Activated CD4-positive, alpha-beta T cell treated with anti-CD3 and anti-CD28 coated beads for 36 hours (primary cell): ENCODE measurements at regions of chr3 and their contacts with region 1.

Region 1: DNA sequence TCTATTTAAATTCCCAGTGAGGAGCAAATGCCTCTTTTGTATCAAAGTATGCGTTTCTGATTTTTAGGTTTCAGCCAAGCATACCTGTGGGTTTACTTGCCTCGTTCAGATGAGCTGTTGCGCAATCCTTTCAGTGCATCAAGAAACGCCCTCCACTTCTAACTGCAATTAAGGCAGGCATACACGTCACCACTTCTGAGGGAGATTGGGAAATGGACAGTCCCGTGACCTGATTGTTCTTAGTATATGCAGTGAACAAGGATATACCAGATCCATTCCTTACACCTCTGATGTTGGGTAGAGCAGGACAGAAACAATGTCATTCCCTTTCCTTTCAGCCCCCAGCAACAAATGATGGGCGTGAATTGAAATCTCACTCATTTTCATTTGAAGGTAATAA is 219.0 kb downstream of the ITPR1 start:
- DNase-seq: no peak
- ATAC-seq: no peak
- H3K4me3 Mint-ChIP-seq: no peak overlapping the region
- H3K27ac Mint-ChIP-seq: no peak overlapping the region
- H3K4me1 Mint-ChIP-seq: no peaks in the 10 kb centered on the region
- H3K27me3 Mint-ChIP-seq: no peaks in the 10 kb centered on the region

Region 2: DNA sequence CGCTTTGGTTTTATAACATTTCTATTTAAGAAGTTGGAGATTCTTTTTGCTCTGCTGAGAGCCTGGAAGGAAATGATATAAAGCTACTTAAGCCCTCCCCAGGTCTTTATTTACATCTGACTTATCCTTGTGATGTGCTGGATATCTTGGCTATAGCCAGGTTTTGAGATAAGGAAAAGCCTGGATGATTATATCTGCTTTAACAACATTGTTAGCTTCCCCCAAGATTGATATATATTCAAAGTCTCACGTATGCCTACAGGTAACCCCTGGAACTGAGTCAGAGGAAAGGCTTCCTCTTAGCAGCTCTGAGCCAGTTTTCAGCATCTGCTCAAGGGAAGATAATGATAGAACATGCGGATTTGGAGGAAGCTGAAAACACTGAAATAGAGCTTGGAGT is 1471.2 kb before region 1 on chr3:
- CTCF ChIA-PET with region 1: no interaction called
- POLR2A ChIA-PET with region 1: no interaction called
- intact Hi-C with region 1: no loop called
- DNase-seq: no peak
- ATAC-seq: no peak
- H3K4me3 Mint-ChIP-seq: no peak overlapping the region
- H3K27ac Mint-ChIP-seq: no peak overlapping the region
- H3K4me1 Mint-ChIP-seq: no peaks in the 10 kb centered on the region
- H3K27me3 Mint-ChIP-seq: no peaks in the 10 kb centered on the region

Region 3: GRCh38 chr3:4340411-4341335 is 371.5 kb before region 1 on chr3:
- CTCF ChIA-PET with region 1: no interaction called
- POLR2A ChIA-PET with region 1: no interaction called
- intact Hi-C with region 1: no loop called
- DNase-seq: no peak
- ATAC-seq: no peak
- H3K4me3 Mint-ChIP-seq: no peak overlapping the region
- H3K27ac Mint-ChIP-seq: peak overlapping the region; percentile 1
- H3K4me1 Mint-ChIP-seq: no peaks in the 10 kb centered on the region
- H3K27me3 Mint-ChIP-seq: no peaks in the 10 kb centered on the region

Region 4: DNA sequence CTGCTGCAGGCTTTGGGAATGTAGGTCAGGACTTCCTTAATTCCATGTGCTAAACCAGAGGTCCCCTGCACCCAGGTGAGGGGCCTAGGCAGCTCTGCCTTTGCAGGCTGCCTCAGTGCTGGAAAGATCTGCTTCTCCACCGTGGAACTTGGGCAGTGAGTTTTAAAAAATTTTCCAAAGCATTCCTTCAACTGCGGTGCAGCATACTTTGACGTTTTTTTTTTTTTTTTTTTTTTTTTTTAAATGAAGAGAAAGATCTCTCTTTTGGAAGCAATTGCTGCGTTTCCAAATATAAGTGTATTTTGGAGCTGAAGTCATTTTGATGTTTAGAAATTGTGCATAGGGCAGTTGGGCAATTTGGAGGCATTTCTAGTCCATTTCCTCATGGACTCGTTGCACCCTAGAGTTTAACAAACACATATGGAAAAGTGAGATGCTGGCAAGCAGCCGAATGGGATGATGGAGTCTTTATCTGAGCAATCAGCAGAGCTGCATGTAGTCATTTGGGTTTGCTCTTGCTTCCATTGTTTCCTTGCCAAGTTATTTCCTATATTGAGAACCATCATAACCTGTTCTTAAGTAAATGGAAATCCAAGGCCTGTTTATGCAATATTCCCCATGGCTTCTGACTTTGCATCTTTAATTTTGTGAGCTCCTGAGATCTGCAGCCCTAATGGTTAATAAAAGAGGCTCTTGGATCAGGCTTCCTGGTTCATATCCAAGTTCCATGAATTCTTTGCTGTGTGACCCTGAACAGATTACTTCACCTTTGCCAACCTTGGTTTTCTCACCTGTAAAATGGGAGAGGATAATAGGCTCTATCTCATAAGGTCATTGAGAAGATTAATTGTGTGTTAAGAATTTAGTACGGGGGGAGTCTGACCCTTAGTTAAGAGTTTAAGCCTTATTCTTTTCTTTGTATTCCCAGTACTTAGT is 187.8 kb before region 1 on chr3:
- CTCF ChIA-PET with region 1: no interaction called
- POLR2A ChIA-PET with region 1: no interaction called
- intact Hi-C with region 1: no loop called
- DNase-seq: no peak
- ATAC-seq: no peak
- H3K4me3 Mint-ChIP-seq: no peak overlapping the region
- H3K27ac Mint-ChIP-seq: no peak overlapping the region
- H3K4me1 Mint-ChIP-seq: peaks cover 19% of the 10 kb centered on the region
- H3K27me3 Mint-ChIP-seq: no peaks in the 10 kb centered on the region

Region 5: DNA sequence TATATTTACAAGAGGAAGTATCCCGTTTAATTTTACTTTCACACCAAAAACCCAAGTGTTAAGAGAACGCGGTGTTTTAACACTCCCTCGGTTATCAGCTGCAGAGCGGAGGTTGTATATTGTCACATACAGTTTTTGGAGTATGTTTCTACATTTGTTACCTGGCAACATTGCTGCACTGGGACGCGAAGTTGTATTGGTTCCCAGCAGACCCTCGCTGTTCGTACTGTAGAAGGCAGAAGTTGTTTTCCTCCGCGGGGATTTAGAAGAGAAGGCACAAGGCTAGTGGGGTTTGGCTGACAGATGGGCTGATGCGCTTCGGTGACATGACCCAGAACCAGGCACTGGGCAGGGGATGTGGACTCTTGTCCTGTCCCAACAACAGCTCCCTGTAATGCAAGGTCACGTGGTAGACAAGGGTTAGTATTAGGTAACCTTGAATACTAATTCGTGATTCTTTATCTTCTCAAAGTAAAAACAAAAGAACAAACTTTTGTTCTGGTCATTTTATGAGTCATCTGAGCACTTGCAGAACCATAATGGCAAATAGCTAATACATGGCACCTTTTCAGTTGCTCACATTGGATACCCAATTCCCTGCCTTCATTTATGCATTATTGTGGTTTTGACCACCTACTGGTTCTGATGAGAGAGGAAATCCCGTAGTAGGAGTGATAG is 36.7 kb after region 1 on chr3:
- CTCF ChIA-PET with region 1: interaction called, 13 read pairs
- POLR2A ChIA-PET with region 1: no interaction called
- intact Hi-C with region 1: no loop called
- DNase-seq: no peak
- ATAC-seq: no peak
- H3K4me3 Mint-ChIP-seq: no peak overlapping the region
- H3K27ac Mint-ChIP-seq: no peak overlapping the region
- H3K4me1 Mint-ChIP-seq: peaks cover 32% of the 10 kb centered on the region
- H3K27me3 Mint-ChIP-seq: no peaks in the 10 kb centered on the region

Region 6: GRCh38 chr3:4850928-4851265 is 138.8 kb after region 1 on chr3:
- CTCF ChIA-PET with region 1: interaction called, 11 read pairs
- POLR2A ChIA-PET with region 1: no interaction called
- intact Hi-C with region 1: no loop called
- DNase-seq: peak; percentile 56
- ATAC-seq: peak; percentile 72
- H3K4me3 Mint-ChIP-seq: peak overlapping the region; percentile 39
- H3K27ac Mint-ChIP-seq: peak overlapping the region; percentile 98
- H3K4me1 Mint-ChIP-seq: peaks cover 84% of the 10 kb centered on the region
- H3K27me3 Mint-ChIP-seq: no peaks in the 10 kb centered on the region

Region 7: DNA sequence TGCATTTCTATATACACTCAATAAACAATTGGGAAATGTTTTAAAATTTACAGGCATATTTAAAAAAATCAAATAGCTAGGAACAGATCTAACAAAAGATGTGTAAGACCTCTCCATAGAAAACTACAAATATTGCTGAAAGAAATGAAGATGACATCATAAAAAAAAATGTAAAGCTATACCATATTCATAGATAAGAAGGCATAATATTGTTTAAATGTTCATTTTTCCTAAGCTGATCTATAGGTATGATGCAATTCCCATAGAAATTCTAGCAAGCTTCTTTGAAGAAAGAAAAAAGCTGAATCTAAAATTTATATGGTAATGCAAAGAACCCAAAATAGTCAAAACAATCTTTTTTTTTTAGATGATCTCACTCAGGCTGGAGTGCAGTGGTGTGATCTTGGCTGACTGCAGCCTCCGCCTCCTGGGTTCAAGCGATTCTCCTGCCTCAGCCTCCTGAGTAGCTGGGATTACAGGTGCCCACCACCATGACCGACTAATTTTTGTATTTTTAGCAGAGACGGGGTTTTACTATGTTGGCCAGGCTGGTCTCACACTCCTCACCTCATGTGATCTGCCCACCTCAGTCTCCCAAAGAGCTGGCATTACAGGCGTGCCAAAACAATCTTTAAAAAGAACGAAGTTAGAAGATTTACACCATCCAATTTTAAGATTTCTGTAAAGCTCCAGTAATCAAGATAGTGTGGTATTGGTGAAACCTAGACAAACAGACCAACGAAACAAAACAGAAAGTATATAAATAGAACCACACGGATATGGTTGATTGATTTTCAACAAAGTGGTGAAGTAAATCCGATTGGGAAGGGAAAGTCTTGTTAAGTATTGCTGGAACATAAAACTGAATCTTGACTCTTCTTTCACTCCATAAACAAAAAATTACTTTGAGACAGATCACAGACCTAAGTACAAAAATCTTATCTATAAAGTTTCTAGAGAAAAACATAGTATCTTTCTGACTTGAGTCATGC is 260.8 kb after region 1 on chr3:
- CTCF ChIA-PET with region 1: interaction called, 91 read pairs
- POLR2A ChIA-PET with region 1: no interaction called
- intact Hi-C with region 1: loop called (anchors 1 kb)
- DNase-seq: no peak
- ATAC-seq: no peak
- H3K4me3 Mint-ChIP-seq: no peak overlapping the region
- H3K27ac Mint-ChIP-seq: peak overlapping the region; percentile 55
- H3K4me1 Mint-ChIP-seq: peaks cover 28% of the 10 kb centered on the region
- H3K27me3 Mint-ChIP-seq: no peaks in the 10 kb centered on the region

Region 8: GRCh38 chr3:5016218-5017161 is 304.3 kb after region 1 on chr3:
- CTCF ChIA-PET with region 1: interaction called, 11 read pairs
- POLR2A ChIA-PET with region 1: no interaction called
- intact Hi-C with region 1: no loop called
- DNase-seq: peak; percentile 48
- ATAC-seq: peak; percentile 52
- H3K4me3 Mint-ChIP-seq: no peak overlapping the region
- H3K27ac Mint-ChIP-seq: peak overlapping the region; percentile 30
- H3K4me1 Mint-ChIP-seq: peaks cover 68% of the 10 kb centered on the region
- H3K27me3 Mint-ChIP-seq: peaks cover 13% of the 10 kb centered on the region

Region 9: GRCh38 chr3:5057857-5058324 is 345.7 kb after region 1 on chr3:
- CTCF ChIA-PET with region 1: interaction called, 190 read pairs
- POLR2A ChIA-PET with region 1: interaction called, 3 read pairs
- intact Hi-C with region 1: loop called (anchors 1 kb)
- DNase-seq: peak; percentile 87
- ATAC-seq: peak; percentile 96
- H3K4me3 Mint-ChIP-seq: no peak overlapping the region
- H3K27ac Mint-ChIP-seq: peak overlapping the region; percentile 11
- H3K4me1 Mint-ChIP-seq: peaks cover 17% of the 10 kb centered on the region
- H3K27me3 Mint-ChIP-seq: peaks cover 8% of the 10 kb centered on the region

Region 10: GRCh38 chr3:5187156-5187919 is 475.2 kb after region 1 on chr3 and contains the start of gene EDEM1:
- CTCF ChIA-PET with region 1: no interaction called
- POLR2A ChIA-PET with region 1: no interaction called
- intact Hi-C with region 1: loop called in 1 of 2 experiments (anchors 10 kb)
- DNase-seq: peak; percentile 97
- ATAC-seq: peak; percentile 84
- H3K4me3 Mint-ChIP-seq: peak within 1 kb of the TSS; percentile 99
- H3K27ac Mint-ChIP-seq: peak within 1 kb of the TSS; percentile 99
- H3K4me1 Mint-ChIP-seq: peaks cover 23% of the 10 kb centered on the region
- H3K27me3 Mint-ChIP-seq: no peaks in the 10 kb centered on the region
- total RNA-seq, gene EDEM1: 105 to 175 TPM